ENCODE measurements at regions of chr20 and their contacts with region 1.

Region 1: DNA sequence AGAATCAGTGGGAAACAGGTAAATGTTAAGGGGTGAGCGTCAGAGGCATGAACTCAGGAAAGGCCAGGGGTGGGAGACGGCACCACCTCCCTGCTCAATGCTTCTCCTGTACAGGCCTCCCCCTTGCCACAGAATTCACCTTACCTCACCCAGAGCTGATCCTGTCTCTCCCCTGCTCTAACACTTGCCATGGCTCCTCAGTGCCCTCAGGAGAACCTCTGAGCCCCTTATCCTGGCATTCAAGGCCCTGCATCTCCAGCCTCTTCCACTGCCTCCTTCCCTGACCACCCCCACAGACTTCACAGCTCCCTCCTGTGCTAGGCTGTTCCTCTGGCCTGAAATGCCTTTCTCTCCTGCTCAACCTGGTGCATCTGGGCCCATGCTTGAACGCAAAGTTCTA is 33.9 kb downstream of the BPIFB1 start:
- DNase-seq: no peak
- ATAC-seq: no peak
- H3K4me3 ChIP-seq: no peak overlapping the region
- H3K4me3 Mint-ChIP-seq: no peak overlapping the region
- H3K27ac ChIP-seq: no peak overlapping the region
- H3K27ac Mint-ChIP-seq: no peak overlapping the region
- H3K4me1 ChIP-seq: no peaks in the 10 kb centered on the region
- H3K4me1 Mint-ChIP-seq: no peaks in the 10 kb centered on the region
- H3K27me3 ChIP-seq: no peaks in the 10 kb centered on the region
- H3K27me3 Mint-ChIP-seq: peaks cover 0 to 4% of the 10 kb centered on the region in 2 donors
- CTCF ChIP-seq: no peak

Region 2: DNA sequence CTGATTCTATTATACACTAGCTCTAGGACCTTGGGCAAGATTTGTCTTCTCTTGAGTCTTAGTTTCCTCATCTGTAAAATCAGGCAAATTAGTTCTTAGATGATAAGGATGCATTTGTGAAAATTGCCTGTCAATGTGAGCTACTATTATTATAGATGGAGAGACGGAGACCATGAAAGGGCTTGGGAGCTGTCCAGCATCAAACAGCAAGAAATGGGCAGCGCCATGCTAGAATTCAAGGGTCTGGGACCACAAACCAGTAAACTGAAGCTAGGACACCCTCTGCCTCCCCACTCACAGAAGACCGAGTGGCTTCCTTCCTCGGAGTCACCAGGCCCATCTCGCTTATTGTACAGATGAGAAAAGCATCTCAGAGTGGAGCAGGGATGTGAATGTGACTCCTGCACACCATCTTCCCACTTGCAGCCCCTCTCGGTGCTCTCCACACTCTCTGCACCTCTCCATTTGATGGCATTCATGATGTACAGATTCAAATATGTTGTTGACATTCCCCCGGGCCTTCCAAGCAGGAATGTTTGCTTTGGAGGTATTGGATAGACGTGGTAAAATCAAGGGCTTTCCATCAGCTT is 124.0 kb before region 1 on chr20:
- intact Hi-C with region 1: no loop called
- DNase-seq: no peak
- ATAC-seq: no peak
- H3K4me3 ChIP-seq: no peak overlapping the region
- H3K4me3 Mint-ChIP-seq: no peak overlapping the region
- H3K27ac ChIP-seq: no peak overlapping the region
- H3K27ac Mint-ChIP-seq: no peak overlapping the region
- H3K4me1 ChIP-seq: no peaks in the 10 kb centered on the region
- H3K4me1 Mint-ChIP-seq: no peaks in the 10 kb centered on the region
- H3K27me3 ChIP-seq: no peaks in the 10 kb centered on the region
- H3K27me3 Mint-ChIP-seq: peaks cover 3 to 28% of the 10 kb centered on the region in 2 donors
- CTCF ChIP-seq: no peak

Region 3: GRCh38 chr20:33299111-33299603 is 17.8 kb before region 1 on chr20:
- intact Hi-C with region 1: loop called (anchors 1 kb)
- DNase-seq: peak; percentile 72 to 84
- ATAC-seq: peak; percentile 78 to 96 (median 85)
- H3K4me3 ChIP-seq: no peak overlapping the region
- H3K4me3 Mint-ChIP-seq: no peak overlapping the region
- H3K27ac ChIP-seq: no peak overlapping the region
- H3K27ac Mint-ChIP-seq: no peak overlapping the region
- H3K4me1 ChIP-seq: peaks cover 6% of the 10 kb centered on the region
- H3K4me1 Mint-ChIP-seq: peaks cover 0 to 5% of the 10 kb centered on the region in 2 donors
- H3K27me3 ChIP-seq: no peaks in the 10 kb centered on the region
- H3K27me3 Mint-ChIP-seq: peaks cover 14 to 16% of the 10 kb centered on the region in 2 donors
- CTCF ChIP-seq: peak; percentile 96

Measured in natural killer cell (primary cell).